HEK293T (cell line): ENCODE measurements at regions of chr6 and their contacts with region 1.

Region 1: DNA sequence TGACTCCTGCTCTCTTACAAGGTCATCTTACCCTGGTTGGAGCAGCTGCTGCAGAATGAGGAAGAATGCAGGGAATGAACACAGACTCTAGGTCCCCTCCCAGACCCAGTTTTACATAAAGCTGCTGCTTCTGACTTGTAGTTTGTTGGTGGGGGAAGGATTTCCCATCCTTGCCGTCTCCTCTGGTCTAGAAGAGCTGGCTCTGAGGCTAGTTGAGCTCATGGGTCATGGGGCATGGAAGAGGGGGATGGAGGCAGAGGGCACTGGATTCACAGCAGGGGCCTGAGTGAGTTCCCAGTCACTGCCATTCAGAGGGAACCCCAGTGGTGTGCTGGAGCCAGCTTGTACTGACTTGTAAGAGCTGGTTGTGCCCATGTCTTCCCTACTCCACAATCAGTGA is 9.2 kb upstream of the GUCA1A start:
- DNase-seq: no peak

Region 2: DNA sequence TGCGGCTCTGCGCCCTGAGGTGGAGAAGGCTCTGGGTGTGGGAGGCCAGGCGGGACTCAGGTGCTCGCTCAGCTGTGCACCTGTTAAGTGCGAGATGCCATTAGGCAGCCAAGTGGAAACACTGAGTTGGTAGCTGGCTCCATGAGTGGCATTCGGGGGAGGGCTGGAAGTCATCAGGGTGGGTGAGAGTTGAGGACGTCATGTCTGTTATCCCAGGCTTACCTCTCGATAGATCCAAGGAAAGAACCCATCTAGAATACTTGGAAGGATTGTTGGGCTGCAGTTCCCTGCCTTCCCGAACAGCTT is 72.3 kb before region 1 on chr6:
- CTCF ChIA-PET with region 1: interaction called, 11 read pairs
- POLR2A ChIA-PET with region 1: no interaction called
- DNase-seq: no peak